Gastrocnemius medialis (tissue), 4 donors: ENCODE measurements at regions of chr12 and their contacts with region 1.

Region 1: DNA sequence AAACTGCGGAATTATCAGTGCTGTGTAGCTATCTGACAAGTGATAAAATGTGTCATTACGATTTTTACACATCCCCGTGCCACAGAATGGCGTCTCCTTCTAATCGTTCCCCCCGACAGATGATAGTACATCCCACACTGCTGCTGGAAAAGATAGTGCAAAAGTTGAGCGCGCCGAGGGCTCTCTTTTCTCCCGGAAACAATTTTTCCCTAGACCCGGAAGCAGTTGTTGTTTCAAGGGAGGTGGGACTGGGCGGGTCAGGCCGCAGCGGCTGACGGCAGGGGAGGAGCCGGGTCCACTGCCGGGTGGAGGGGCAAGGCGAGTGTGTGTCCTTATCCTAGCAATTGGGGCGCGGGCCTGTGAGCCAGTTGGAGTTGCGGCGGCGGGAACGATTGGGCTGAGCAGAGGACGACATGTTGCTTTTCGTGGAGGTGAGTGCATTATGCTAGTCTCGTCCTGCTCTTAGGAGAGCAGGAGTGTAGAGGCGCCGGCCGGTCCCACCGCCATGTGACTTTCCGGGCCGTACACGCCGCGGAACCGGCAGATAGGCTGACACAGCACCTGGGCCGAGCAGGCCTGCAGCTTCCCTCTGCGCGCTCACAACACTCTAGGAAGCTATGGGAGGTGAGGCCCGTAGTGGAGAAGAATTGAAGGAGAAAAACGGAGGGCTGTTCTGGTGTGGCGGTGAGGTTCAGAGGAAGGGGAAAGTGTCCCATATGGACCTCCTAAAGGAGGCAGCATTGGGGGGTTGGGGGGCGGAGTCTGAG is at the start of gene LARP4:
- DNase-seq: peak; percentile 91 to 93
- ATAC-seq: peak; percentile 94 to 95
- H3K4me3 ChIP-seq: peak within 1 kb of the TSS; percentile 75 to 93 (median 83)
- H3K27ac ChIP-seq: peak within 1 kb of the TSS; percentile 92 to 98 (median 96)
- H3K4me1 ChIP-seq: peaks cover 20 to 24% of the 10 kb centered on the region in 2 donors
- H3K27me3 ChIP-seq: no peaks in the 10 kb centered on the region
- CTCF ChIP-seq: no peak
- POLR2A ChIP-seq: peak; percentile 95 to 96
- total RNA-seq, gene LARP4: 32.7 to 70.2 (median 42.4) TPM

Region 2: DNA sequence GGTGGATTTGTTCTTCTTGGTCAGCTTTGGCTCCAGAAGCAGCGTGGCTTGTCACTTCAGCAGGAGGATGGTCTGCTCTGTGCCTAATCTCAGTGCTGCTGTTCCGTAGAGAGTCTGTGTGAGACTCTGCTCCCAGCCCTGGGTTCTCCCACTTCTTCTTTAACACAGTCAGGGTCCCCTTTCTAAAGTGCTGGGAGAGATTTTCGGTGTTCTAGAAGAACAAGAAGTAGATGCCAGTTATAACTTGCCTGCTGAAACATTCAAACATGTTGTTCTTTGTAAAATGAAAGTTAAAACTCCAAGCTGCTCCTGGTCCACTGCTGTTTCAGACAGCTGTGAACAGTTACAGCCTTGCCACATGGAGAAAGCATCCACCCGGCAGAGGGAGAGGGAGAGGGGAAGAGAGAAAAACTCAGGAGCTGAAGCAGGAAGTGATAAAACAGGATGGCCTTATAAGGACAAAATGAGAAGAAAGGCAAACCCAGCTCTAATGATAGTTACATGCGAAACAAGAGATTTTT is 178.4 kb before region 1 on chr12:
- in situ Hi-C with region 1: no loop called
- intact Hi-C with region 1: loop called (anchors 5 kb)
- DNase-seq: peak; percentile 39 to 45
- ATAC-seq: peak; percentile 61 to 73
- H3K4me3 ChIP-seq: peak overlapping the region; percentile 45 to 54 (median 46)
- H3K27ac ChIP-seq: peak overlapping the region; percentile 60 to 78 (median 76)
- H3K4me1 ChIP-seq: peaks cover 19 to 29% of the 10 kb centered on the region in 2 donors
- H3K27me3 ChIP-seq: no peaks in the 10 kb centered on the region
- CTCF ChIP-seq: peak in 1 of 5 experiments; percentile 27
- POLR2A ChIP-seq: peak; percentile 16 to 29

Region 3: GRCh38 chr12:50520416-50521207 is 119.8 kb after region 1 on chr12:
- in situ Hi-C with region 1: no loop called
- intact Hi-C with region 1: no loop called
- DNase-seq: no peak
- ATAC-seq: peak; percentile 61 to 72
- H3K4me3 ChIP-seq: no peak overlapping the region
- H3K27ac ChIP-seq: peak overlapping the region; percentile 58 to 84 (median 70)
- H3K4me1 ChIP-seq: peaks cover 15 to 21% of the 10 kb centered on the region in 2 donors
- H3K27me3 ChIP-seq: no peaks in the 10 kb centered on the region
- CTCF ChIP-seq: no peak
- POLR2A ChIP-seq: no peak